CD8-positive, alpha-beta memory T cell (primary cell): ENCODE measurements at regions of chr6 and their contacts with region 1.

Region 1: GRCh38 chr6:89371849-89372505 is 19.5 kb upstream of the UBE2J1 start:
- DNase-seq: peak; percentile 61 to 85 (median 67)
- H3K4me3 ChIP-seq: no peak overlapping the region
- H3K4me3 Mint-ChIP-seq: peak overlapping the region in 1 of 7 donors; percentile 32
- H3K27ac ChIP-seq: no peak overlapping the region
- H3K27ac Mint-ChIP-seq: peak overlapping the region in 6 of 8 donors; percentile 12 to 66 (median 58)
- H3K4me1 ChIP-seq: peaks cover 19% of the 10 kb centered on the region
- H3K4me1 Mint-ChIP-seq: peaks cover 19 to 36% (median 23%) of the 10 kb centered on the region in 3 donors
- H3K27me3 ChIP-seq: no peaks in the 10 kb centered on the region
- H3K27me3 Mint-ChIP-seq: peaks cover 0 to 2% of the 10 kb centered on the region in 2 donors

Region 2: GRCh38 chr6:88982720-88983119 is 389.3 kb before region 1 on chr6:
- CTCF ChIA-PET with region 1: interaction called, 36 read pairs
- POLR2A ChIA-PET with region 1: no interaction called
- DNase-seq: peak in 2 of 5 donors; percentile 47 to 54
- H3K4me3 ChIP-seq: no peak overlapping the region
- H3K4me3 Mint-ChIP-seq: no peak overlapping the region
- H3K27ac ChIP-seq: no peak overlapping the region
- H3K27ac Mint-ChIP-seq: no peak overlapping the region
- H3K4me1 ChIP-seq: peaks cover 3% of the 10 kb centered on the region
- H3K4me1 Mint-ChIP-seq: no peaks in the 10 kb centered on the region
- H3K27me3 ChIP-seq: no peaks in the 10 kb centered on the region
- H3K27me3 Mint-ChIP-seq: peaks cover 2 to 4% of the 10 kb centered on the region in 2 donors

Region 3: DNA sequence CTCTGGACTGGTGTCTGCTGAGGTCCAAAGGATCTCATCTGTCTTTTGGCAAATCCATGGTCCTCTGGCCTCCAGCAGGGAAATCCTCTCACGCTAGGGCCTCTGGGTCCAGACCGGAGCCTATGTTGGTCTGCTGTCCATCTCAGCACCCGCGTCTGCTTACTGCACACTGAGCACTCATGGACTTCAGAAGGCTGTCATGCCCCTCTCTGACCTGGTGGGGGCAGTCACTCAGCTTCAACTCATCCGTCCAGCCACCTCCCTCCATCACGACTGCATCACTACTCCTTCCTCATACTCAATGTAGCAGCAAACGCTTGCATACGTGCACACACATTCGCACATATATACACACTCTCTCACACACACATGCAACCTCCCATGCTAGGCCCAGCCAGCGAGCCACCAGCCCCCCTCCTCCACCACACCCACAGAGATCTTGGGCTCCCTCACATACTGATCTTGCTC is 90.2 kb before region 1 on chr6:
- CTCF ChIA-PET with region 1: no interaction called
- POLR2A ChIA-PET with region 1: no interaction called
- DNase-seq: peak in 4 of 5 donors; percentile 7 to 61 (median 22)
- H3K4me3 ChIP-seq: no peak overlapping the region
- H3K4me3 Mint-ChIP-seq: no peak overlapping the region
- H3K27ac ChIP-seq: no peak overlapping the region
- H3K27ac Mint-ChIP-seq: no peak overlapping the region
- H3K4me1 ChIP-seq: no peaks in the 10 kb centered on the region
- H3K4me1 Mint-ChIP-seq: peaks cover 0 to 4% (median 3%) of the 10 kb centered on the region in 3 donors
- H3K27me3 ChIP-seq: no peaks in the 10 kb centered on the region
- H3K27me3 Mint-ChIP-seq: peaks cover 0 to 1% of the 10 kb centered on the region in 2 donors

Region 4: GRCh38 chr6:89352278-89353117 is 19.5 kb before region 1 on chr6 and contains the start of gene UBE2J1:
- CTCF ChIA-PET with region 1: interaction called, 41 read pairs
- POLR2A ChIA-PET with region 1: interaction called, 4 read pairs
- DNase-seq: peak; percentile 59 to 81 (median 72)
- H3K4me3 ChIP-seq: peak within 1 kb of the TSS; percentile 69
- H3K4me3 Mint-ChIP-seq: peak within 1 kb of the TSS; percentile 92 to 99 (median 95)
- H3K27ac ChIP-seq: peak within 1 kb of the TSS; percentile 85
- H3K27ac Mint-ChIP-seq: peak within 1 kb of the TSS; percentile 93 to 98 (median 96)
- H3K4me1 ChIP-seq: peaks cover 57% of the 10 kb centered on the region
- H3K4me1 Mint-ChIP-seq: peaks cover 61 to 74% (median 69%) of the 10 kb centered on the region in 3 donors
- H3K27me3 ChIP-seq: no peaks in the 10 kb centered on the region
- H3K27me3 Mint-ChIP-seq: no peaks in the 10 kb centered on the region
- total RNA-seq, gene UBE2J1: 27.1 to 27.2 TPM

Region 5: GRCh38 chr6:89360415-89360999 is 11.5 kb before region 1 on chr6:
- CTCF ChIA-PET with region 1: interaction called, 27 read pairs
- POLR2A ChIA-PET with region 1: no interaction called
- DNase-seq: no peak
- H3K4me3 ChIP-seq: no peak overlapping the region
- H3K4me3 Mint-ChIP-seq: peak overlapping the region in 1 of 7 donors; percentile 51
- H3K27ac ChIP-seq: no peak overlapping the region
- H3K27ac Mint-ChIP-seq: peak overlapping the region in 3 of 8 donors; percentile 18 to 53 (median 19)
- H3K4me1 ChIP-seq: peaks cover 24% of the 10 kb centered on the region
- H3K4me1 Mint-ChIP-seq: peaks cover 24 to 47% (median 45%) of the 10 kb centered on the region in 3 donors
- H3K27me3 ChIP-seq: no peaks in the 10 kb centered on the region
- H3K27me3 Mint-ChIP-seq: no peaks in the 10 kb centered on the region

Region 6: DNA sequence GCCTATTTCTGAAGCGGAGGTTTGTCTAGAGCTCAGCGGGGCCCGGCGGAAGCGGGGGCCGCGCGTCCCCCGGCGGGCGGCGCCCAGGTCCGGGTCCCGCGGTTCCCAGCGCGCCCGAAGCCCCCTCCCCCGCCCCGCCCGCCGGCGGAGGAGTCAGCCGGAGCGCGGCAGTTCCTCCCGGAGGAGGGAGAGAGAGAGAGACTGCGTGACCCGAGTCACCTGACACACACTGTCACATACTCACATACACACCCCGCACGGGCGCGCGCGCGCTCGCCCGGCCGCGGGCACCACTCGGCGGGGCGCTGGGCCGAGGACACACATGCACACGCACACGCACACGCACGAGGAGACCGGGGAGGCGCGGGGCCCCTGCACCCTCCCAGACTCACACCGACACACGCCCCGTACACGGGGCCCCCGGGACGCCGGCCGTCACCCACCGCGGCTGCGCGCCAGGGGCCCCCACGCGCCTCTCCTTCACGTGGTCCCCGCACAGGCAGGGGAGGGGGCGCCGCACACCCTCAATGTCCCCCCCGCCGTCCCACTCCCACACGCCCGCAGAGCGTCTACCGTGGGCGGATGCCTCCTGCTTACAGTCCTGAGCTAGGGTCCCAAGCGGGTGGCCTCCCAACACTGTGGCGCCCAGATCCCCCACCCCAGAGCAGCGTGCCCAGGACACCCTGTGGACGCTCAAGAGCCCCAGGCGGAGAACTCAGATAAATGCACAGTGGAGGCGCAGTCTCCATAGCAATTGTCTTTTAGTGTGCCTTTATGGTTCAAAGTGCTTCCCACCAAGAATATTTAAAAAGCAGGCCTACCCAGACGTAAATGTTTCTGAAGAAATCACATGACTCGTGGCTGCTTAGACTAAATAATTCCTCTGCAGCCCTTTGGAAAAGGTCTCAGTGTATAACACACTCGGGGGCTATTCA is 40.4 kb after region 1 on chr6 and contains the start of gene RRAGD:
- CTCF ChIA-PET with region 1: interaction called, 24 read pairs
- POLR2A ChIA-PET with region 1: interaction called, 4 read pairs
- DNase-seq: peak; percentile 32 to 75 (median 47)
- H3K4me3 ChIP-seq: peak within 1 kb of the TSS; percentile 68
- H3K4me3 Mint-ChIP-seq: peak within 1 kb of the TSS; percentile 89 to 98 (median 92)
- H3K27ac ChIP-seq: peak within 1 kb of the TSS; percentile 15
- H3K27ac Mint-ChIP-seq: peak within 1 kb of the TSS; percentile 29 to 84 (median 65)
- H3K4me1 ChIP-seq: peaks cover 20% of the 10 kb centered on the region
- H3K4me1 Mint-ChIP-seq: peaks cover 10 to 25% (median 14%) of the 10 kb centered on the region in 3 donors
- H3K27me3 ChIP-seq: peaks cover 4% of the 10 kb centered on the region
- H3K27me3 Mint-ChIP-seq: peaks cover 28 to 31% of the 10 kb centered on the region in 2 donors
- total RNA-seq, gene RRAGD: 7.3 to 8.7 TPM

Region 7: DNA sequence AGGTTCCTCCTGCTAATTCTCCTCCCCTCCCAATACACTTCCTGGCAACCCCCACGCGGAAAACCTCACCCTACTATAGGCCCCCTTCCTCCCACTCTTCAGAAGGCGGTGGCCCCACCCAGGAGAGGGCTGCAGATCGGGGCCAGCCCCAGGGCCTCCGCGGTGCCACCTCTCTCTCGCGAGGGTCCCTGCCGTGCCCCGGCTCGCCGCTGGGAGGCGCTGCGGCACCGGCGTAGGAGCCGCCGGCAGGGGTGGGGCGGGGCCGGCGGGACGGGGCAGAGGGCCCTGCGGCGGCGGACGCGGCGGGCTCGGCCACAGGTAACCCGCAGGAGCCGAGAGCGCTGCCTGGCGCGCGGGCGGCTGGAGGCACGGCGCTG is 60.9 kb after region 1 on chr6 and contains the start of gene ANKRD6:
- CTCF ChIA-PET with region 1: interaction called, 13 read pairs
- POLR2A ChIA-PET with region 1: no interaction called
- DNase-seq: peak; percentile 78 to 83 (median 78)
- H3K4me3 ChIP-seq: peak within 1 kb of the TSS; percentile 62
- H3K4me3 Mint-ChIP-seq: peak within 1 kb of the TSS; percentile 85 to 95 (median 89)
- H3K27ac ChIP-seq: peak within 1 kb of the TSS; percentile 24
- H3K27ac Mint-ChIP-seq: peak within 1 kb of the TSS in 7 of 8 donors; percentile 67 to 92 (median 83)
- H3K4me1 ChIP-seq: peaks cover 6% of the 10 kb centered on the region
- H3K4me1 Mint-ChIP-seq: peaks cover 24 to 39% (median 24%) of the 10 kb centered on the region in 3 donors
- H3K27me3 ChIP-seq: no peaks in the 10 kb centered on the region
- H3K27me3 Mint-ChIP-seq: peaks cover 3 to 4% of the 10 kb centered on the region in 2 donors
- total RNA-seq, gene ANKRD6: 3.0 to 3.4 TPM

Region 8: GRCh38 chr6:89610149-89610642 is 238.2 kb after region 1 on chr6:
- CTCF ChIA-PET with region 1: interaction called, 11 read pairs
- POLR2A ChIA-PET with region 1: no interaction called
- DNase-seq: peak; percentile 61 to 83 (median 71)
- H3K4me3 ChIP-seq: no peak overlapping the region
- H3K4me3 Mint-ChIP-seq: no peak overlapping the region
- H3K27ac ChIP-seq: no peak overlapping the region
- H3K27ac Mint-ChIP-seq: no peak overlapping the region
- H3K4me1 ChIP-seq: no peaks in the 10 kb centered on the region
- H3K4me1 Mint-ChIP-seq: peaks cover 0 to 5% (median 0%) of the 10 kb centered on the region in 3 donors
- H3K27me3 ChIP-seq: no peaks in the 10 kb centered on the region
- H3K27me3 Mint-ChIP-seq: no peaks in the 10 kb centered on the region